AG04449 (cell line): ENCODE measurements at regions of chr2 and their contacts with region 1.

Region 1: GRCh38 chr2:218876562-218877219 is 4.0 kb upstream of the WNT10A start:
- DNase-seq: no peak
- H3K4me3 ChIP-seq: no peak overlapping the region
- CTCF ChIP-seq: peak; percentile 86

Region 2: DNA sequence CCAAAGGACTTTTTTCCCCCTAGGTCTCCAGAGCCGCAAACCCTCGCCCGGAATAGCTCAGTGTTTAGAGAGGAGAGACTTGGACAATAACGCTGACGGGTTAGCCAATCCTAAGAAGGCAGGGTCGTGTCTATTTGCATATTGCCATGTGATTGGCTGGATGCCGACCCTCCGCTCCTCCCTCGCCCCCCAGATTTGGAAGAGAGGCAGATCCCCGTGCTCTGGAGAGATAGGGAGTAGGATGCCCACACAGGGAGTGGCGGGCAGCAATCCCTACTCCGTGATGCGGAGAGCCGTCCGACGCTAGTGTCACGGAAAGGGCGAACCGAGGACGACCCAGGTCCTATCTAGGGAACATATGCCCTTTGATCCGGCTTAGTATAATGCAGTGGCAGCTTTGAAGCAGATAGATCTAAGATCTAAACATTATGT is 15.7 kb before region 1 on chr2:
- CTCF ChIA-PET with region 1: interaction called, 68 read pairs
- POLR2A ChIA-PET with region 1: no interaction called
- DNase-seq: no peak
- H3K4me3 ChIP-seq: no peak overlapping the region
- CTCF ChIP-seq: no peak

Region 3: DNA sequence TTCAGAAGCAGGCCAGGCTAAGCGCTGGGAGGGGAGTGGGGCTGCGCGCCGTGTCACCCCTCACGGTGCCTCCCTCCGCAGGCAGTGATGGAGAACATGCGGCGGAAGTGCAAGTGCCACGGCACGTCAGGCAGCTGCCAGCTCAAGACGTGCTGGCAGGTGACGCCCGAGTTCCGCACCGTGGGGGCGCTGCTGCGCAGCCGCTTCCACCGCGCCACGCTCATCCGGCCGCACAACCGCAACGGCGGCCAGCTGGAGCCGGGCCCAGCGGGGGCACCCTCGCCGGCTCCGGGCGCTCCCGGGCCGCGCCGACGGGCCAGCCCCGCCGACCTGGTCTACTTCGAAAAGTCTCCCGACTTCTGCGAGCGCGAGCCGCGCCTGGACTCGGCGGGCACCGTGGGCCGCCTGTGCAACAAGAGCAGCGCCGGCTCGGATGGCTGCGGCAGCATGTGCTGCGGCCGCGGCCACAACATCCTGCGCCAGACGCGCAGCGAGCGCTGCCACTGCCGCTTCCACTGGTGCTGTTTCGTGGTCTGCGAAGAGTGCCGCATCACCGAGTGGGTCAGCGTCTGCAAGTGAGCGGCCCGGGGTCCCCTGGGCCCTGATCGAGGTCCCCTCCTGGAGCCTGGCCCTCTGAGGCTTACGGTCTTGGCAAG is 16.1 kb after region 1 on chr2:
- CTCF ChIA-PET with region 1: interaction called, 453 read pairs
- POLR2A ChIA-PET with region 1: no interaction called
- DNase-seq: no peak
- H3K4me3 ChIP-seq: peak overlapping the region; percentile 33
- CTCF ChIP-seq: peak; percentile 48

Region 4: DNA sequence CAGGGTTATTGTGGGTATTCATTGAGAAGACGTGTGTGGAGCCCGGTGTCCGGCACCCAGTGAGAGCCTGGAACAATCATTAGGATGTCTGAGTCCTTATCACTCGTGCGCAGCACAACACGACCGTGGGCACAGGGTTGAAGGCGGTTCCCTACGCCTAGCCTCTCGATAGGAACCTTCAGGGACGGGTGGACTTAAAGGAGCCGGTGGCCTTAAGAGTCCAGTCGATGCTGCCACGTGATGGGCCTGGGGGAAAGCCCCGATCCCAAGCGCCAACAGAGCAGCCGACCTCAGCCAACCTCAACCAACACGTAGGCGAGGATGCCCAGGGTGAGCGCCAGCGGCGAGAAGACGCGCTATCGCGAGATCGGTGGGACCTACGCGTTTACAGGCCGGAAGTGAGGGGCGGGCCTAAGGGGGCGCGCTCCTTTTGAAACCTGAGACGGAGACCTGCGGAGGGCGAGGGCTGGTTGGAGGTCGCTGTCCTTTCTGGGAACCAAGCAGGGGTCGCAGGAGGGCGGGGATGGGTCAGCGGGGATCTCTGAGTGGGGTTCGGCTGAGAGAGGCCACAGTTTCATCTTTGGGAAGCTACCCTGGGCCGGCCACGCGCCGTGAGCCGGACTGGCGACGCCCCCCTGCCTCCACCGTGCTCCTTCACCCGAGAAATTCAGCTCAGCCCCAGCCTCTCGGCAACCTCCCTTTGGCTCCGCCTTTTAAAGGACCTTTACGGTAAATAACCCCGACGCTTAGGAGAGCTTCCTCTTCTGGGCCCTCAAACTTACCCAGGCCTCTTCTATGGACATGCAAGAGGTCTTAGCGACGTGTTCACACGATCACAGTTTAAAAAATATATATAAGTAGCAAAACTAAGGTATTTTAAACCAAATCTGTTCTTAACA is 32.3 kb after region 1 on chr2:
- CTCF ChIA-PET with region 1: interaction called, 30 read pairs
- POLR2A ChIA-PET with region 1: no interaction called
- DNase-seq: peak; percentile 24
- H3K4me3 ChIP-seq: peak overlapping the region; percentile 62
- CTCF ChIP-seq: no peak